ENCODE measurements at regions of chr12 and their contacts with region 1.

Region 1: DNA sequence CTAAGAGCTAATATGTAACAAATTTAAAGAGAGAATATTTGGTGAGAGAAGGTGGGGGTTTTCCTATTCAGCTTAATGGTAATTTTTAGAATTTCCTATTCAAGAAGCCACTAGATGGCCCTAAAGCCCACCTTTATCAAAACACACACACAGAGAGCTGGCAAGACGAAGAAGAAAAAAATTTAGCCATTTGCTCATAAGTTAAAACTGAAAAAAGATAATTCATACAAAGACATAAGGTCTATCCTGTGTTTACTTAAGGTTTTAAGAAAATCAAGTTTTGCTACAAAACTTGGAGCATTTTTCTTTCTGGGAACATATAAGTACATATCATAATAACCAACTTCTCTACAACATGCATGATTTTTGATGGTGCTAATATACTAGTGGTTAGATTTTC is 46.8 kb upstream of the PCED1B start:
- DNase-seq: no peak
- ATAC-seq: peak; percentile 81
- H3K4me3 Mint-ChIP-seq: no peak overlapping the region
- H3K27ac Mint-ChIP-seq: no peak overlapping the region
- H3K4me1 Mint-ChIP-seq: peaks cover 14% of the 10 kb centered on the region
- H3K27me3 Mint-ChIP-seq: no peaks in the 10 kb centered on the region
- CTCF ChIP-seq: peak; percentile 77

Region 2: GRCh38 chr12:46908236-46908935 is 124.3 kb before region 1 on chr12:
- CTCF ChIA-PET with region 1: no interaction called
- POLR2A ChIA-PET with region 1: no interaction called
- intact Hi-C with region 1: no loop called
- DNase-seq: no peak
- ATAC-seq: no peak
- H3K4me3 Mint-ChIP-seq: no peak overlapping the region
- H3K27ac Mint-ChIP-seq: no peak overlapping the region
- H3K4me1 Mint-ChIP-seq: no peaks in the 10 kb centered on the region
- H3K27me3 Mint-ChIP-seq: peaks cover 17% of the 10 kb centered on the region
- CTCF ChIP-seq: no peak

Region 3: DNA sequence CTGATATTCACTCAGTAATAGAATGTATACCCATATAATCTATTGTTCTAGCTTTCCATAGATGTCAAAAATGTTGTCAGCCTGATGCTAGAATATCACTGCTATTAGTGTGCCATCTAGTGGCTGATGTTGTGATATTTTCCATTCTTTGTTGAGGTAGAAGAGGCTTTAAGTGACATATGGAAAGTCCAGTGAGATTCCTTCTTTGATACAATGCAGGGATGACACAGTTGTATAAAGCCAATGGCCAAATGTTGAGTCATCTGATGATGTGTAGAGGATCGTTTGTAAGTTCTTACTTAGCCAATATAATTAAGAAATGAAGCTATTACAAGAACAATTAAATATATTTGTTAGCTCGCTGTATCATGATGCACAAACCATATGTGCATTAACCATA is 11.3 kb before region 1 on chr12:
- CTCF ChIA-PET with region 1: interaction called, 19 read pairs
- POLR2A ChIA-PET with region 1: no interaction called
- intact Hi-C with region 1: no loop called
- DNase-seq: no peak
- ATAC-seq: no peak
- H3K4me3 Mint-ChIP-seq: no peak overlapping the region
- H3K27ac Mint-ChIP-seq: no peak overlapping the region
- H3K4me1 Mint-ChIP-seq: no peaks in the 10 kb centered on the region
- H3K27me3 Mint-ChIP-seq: peaks cover 3% of the 10 kb centered on the region
- CTCF ChIP-seq: peak; percentile 52

Region 4: GRCh38 chr12:47079468-47079980 is 46.9 kb after region 1 on chr12 and contains the starts of genes AMIGO2 and PCED1B:
- CTCF ChIA-PET with region 1: interaction called, 26 read pairs
- POLR2A ChIA-PET with region 1: no interaction called
- intact Hi-C with region 1: loop called (anchors 2 kb)
- DNase-seq: no peak
- ATAC-seq: peak; percentile 47
- H3K4me3 Mint-ChIP-seq: peak within 1 kb of the TSS; percentile 99
- H3K27ac Mint-ChIP-seq: peak within 1 kb of the TSS; percentile 95
- H3K4me1 Mint-ChIP-seq: peaks cover 67% of the 10 kb centered on the region
- H3K27me3 Mint-ChIP-seq: no peaks in the 10 kb centered on the region
- CTCF ChIP-seq: no peak
- total RNA-seq, gene AMIGO2: 13.9 and 14.1 TPM in 2 replicates
- total RNA-seq, gene PCED1B: 60.9 and 65.4 TPM in 2 replicates

Region 5: GRCh38 chr12:47207340-47207717 is 174.7 kb after region 1 on chr12:
- CTCF ChIA-PET with region 1: interaction called, 4 read pairs
- POLR2A ChIA-PET with region 1: interaction called, 4 read pairs
- intact Hi-C with region 1: loop called (anchors 2 kb)
- DNase-seq: peak; percentile 51
- ATAC-seq: peak; percentile 86
- H3K4me3 Mint-ChIP-seq: peak overlapping the region; percentile 68
- H3K27ac Mint-ChIP-seq: peak overlapping the region; percentile 95
- H3K4me1 Mint-ChIP-seq: peaks cover 83% of the 10 kb centered on the region
- H3K27me3 Mint-ChIP-seq: no peaks in the 10 kb centered on the region
- CTCF ChIP-seq: no peak

Region 6: DNA sequence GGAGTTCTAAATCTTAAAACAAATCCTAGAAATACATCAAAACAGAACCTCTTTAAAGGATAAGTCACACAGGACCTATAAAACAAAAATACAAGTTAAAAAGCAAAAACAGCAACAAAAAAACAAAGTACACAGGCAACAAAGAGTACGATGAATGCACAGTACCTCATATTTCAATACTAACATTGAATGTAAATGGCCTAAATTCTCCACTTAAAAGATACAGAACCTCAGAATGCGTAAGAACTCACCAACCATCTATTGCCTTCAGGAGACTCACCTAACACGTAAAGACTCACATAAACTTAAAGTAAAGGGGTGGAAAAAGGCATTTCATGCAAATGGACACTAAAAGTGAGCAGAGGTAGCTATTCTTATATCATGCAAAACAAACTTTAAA is 219.3 kb after region 1 on chr12:
- CTCF ChIA-PET with region 1: no interaction called
- POLR2A ChIA-PET with region 1: no interaction called
- intact Hi-C with region 1: no loop called
- DNase-seq: no peak
- ATAC-seq: no peak
- H3K4me3 Mint-ChIP-seq: no peak overlapping the region
- H3K27ac Mint-ChIP-seq: no peak overlapping the region
- H3K4me1 Mint-ChIP-seq: no peaks in the 10 kb centered on the region
- H3K27me3 Mint-ChIP-seq: no peaks in the 10 kb centered on the region
- CTCF ChIP-seq: no peak

Region 7: GRCh38 chr12:47413806-47414205 is 381.2 kb after region 1 on chr12:
- CTCF ChIA-PET with region 1: interaction called, 66 read pairs
- POLR2A ChIA-PET with region 1: interaction called, 5 read pairs
- intact Hi-C with region 1: no loop called
- DNase-seq: no peak
- ATAC-seq: no peak
- H3K4me3 Mint-ChIP-seq: no peak overlapping the region
- H3K27ac Mint-ChIP-seq: no peak overlapping the region
- H3K4me1 Mint-ChIP-seq: peaks cover 12% of the 10 kb centered on the region
- H3K27me3 Mint-ChIP-seq: no peaks in the 10 kb centered on the region
- CTCF ChIP-seq: no peak

Region 8: GRCh38 chr12:47651368-47652254 is 619.0 kb after region 1 on chr12:
- CTCF ChIA-PET with region 1: interaction called, 12 read pairs
- POLR2A ChIA-PET with region 1: no interaction called
- intact Hi-C with region 1: loop called (anchors 1 kb)
- DNase-seq: no peak
- ATAC-seq: peak; percentile 90
- H3K4me3 Mint-ChIP-seq: no peak overlapping the region
- H3K27ac Mint-ChIP-seq: peak overlapping the region; percentile 35
- H3K4me1 Mint-ChIP-seq: peaks cover 15% of the 10 kb centered on the region
- H3K27me3 Mint-ChIP-seq: no peaks in the 10 kb centered on the region
- CTCF ChIP-seq: no peak

Region 9: GRCh38 chr12:47779301-47779942 is 746.8 kb after region 1 on chr12:
- CTCF ChIA-PET with region 1: no interaction called
- POLR2A ChIA-PET with region 1: no interaction called
- intact Hi-C with region 1: loop called (anchors 2 kb)
- DNase-seq: peak; percentile 90
- ATAC-seq: peak; percentile 93
- H3K4me3 Mint-ChIP-seq: no peak overlapping the region
- H3K27ac Mint-ChIP-seq: peak overlapping the region; percentile 41
- H3K4me1 Mint-ChIP-seq: peaks cover 15% of the 10 kb centered on the region
- H3K27me3 Mint-ChIP-seq: no peaks in the 10 kb centered on the region
- CTCF ChIP-seq: no peak